Activated B cell treated with CpG ODN at 0.5 μM for 24 hours (primary cell): ENCODE measurements at regions of chr18 and their contacts with region 1.

Region 1: GRCh38 chr18:23918401-23919032 is 96.0 kb upstream of the TTC39C start:
- DNase-seq: peak; percentile 49
- ATAC-seq: peak; percentile 66
- H3K4me3 Mint-ChIP-seq: no peak overlapping the region
- H3K27ac Mint-ChIP-seq: no peak overlapping the region
- H3K4me1 Mint-ChIP-seq: peaks cover 4% of the 10 kb centered on the region
- H3K27me3 Mint-ChIP-seq: peaks cover 2% of the 10 kb centered on the region
- CTCF ChIP-seq: peak; percentile 54

Region 2: GRCh38 chr18:22800551-22800951 is 1118.0 kb before region 1 on chr18:
- CTCF ChIA-PET with region 1: no interaction called
- POLR2A ChIA-PET with region 1: no interaction called
- intact Hi-C with region 1: loop called (anchors 5 kb)
- DNase-seq: no peak
- ATAC-seq: no peak
- H3K4me3 Mint-ChIP-seq: no peak overlapping the region
- H3K27ac Mint-ChIP-seq: no peak overlapping the region
- H3K4me1 Mint-ChIP-seq: no peaks in the 10 kb centered on the region
- H3K27me3 Mint-ChIP-seq: peaks cover 7% of the 10 kb centered on the region
- CTCF ChIP-seq: no peak

Region 3: DNA sequence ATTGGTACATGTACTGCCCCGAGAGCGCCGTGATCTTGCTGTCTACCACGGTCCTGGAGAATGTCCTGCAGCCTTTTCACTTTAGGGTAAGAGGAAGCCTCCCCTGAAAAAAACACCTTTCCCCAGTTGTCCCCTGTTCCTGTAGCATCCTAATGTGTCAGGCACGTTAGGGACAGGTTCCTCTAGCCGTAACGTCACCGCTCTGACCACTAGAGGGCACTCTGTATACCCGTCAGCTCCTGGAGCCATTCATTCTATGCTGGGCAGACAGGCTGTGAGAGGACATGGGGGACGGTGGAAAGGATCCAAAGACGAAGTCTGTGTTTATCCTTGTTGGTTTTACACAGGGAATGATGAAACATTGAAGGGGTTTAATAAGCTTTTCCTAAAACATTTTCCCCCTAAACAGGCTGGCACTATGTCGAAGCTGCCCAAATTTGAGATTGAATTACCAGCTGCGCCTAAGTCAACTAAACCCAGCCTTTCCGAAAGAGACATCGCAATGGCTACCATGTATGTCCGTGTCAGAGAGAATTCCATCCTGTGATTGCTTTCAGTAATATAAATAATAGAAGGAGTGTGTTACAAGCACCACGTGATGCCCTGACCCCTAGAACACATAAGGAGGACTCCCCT is 402.5 kb before region 1 on chr18:
- CTCF ChIA-PET with region 1: no interaction called
- POLR2A ChIA-PET with region 1: no interaction called
- intact Hi-C with region 1: loop called (anchors 2 kb)
- DNase-seq: peak; percentile 42
- ATAC-seq: peak; percentile 97
- H3K4me3 Mint-ChIP-seq: no peak overlapping the region
- H3K27ac Mint-ChIP-seq: peak overlapping the region; percentile 74
- H3K4me1 Mint-ChIP-seq: peaks cover 35% of the 10 kb centered on the region
- H3K27me3 Mint-ChIP-seq: no peaks in the 10 kb centered on the region
- CTCF ChIP-seq: peak; percentile 78

Region 4: GRCh38 chr18:23725832-23726661 is 192.5 kb before region 1 on chr18:
- CTCF ChIA-PET with region 1: no interaction called
- POLR2A ChIA-PET with region 1: no interaction called
- intact Hi-C with region 1: no loop called
- DNase-seq: no peak
- ATAC-seq: no peak
- H3K4me3 Mint-ChIP-seq: no peak overlapping the region
- H3K27ac Mint-ChIP-seq: no peak overlapping the region
- H3K4me1 Mint-ChIP-seq: no peaks in the 10 kb centered on the region
- H3K27me3 Mint-ChIP-seq: peaks cover 14% of the 10 kb centered on the region
- CTCF ChIP-seq: no peak

Region 5: DNA sequence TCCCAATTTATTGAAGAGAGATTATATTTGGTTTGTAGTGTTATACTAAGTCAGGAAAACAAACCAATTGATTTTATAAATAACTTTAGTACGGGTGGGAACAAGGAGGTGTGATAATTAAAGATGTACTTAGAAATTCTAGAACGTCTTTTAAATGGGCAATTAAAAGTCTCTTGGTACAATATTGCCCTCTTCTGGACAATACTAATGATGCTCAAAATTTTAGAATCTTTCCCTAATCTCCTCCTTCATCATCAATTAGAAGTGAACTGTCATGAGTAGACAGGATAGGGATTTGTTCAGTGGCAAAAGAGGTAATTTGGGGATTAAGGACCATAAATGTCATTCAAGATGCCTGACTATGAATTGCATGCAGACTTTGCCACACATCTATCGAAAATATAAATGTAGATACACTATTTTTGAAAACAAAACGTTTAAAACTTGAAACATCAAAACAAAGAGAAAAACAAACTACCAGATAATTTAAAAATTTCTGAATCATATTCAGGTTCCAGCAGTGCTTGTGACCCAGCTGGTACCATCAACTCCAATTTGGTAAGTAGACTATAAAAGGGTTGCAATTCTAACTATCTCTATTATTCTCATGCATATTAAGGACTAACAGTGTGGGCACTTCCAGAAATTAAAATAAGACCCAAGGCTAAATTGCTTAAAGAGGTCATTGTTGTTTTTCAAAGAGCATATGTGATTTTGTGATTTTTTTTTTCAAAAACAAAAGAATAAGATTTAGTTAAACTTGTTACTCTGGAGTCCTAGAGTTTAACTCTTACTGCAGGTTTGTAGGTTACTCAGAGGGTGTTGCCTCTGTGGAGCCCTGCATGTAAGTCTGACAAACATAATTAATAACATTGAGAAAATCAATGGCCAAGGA is 105.7 kb before region 1 on chr18:
- CTCF ChIA-PET with region 1: interaction called, 9 read pairs
- POLR2A ChIA-PET with region 1: no interaction called
- intact Hi-C with region 1: loop called (anchors 1 kb)
- DNase-seq: no peak
- ATAC-seq: no peak
- H3K4me3 Mint-ChIP-seq: no peak overlapping the region
- H3K27ac Mint-ChIP-seq: no peak overlapping the region
- H3K4me1 Mint-ChIP-seq: peaks cover 11% of the 10 kb centered on the region
- H3K27me3 Mint-ChIP-seq: no peaks in the 10 kb centered on the region
- CTCF ChIP-seq: no peak

Region 6: GRCh38 chr18:23861805-23862470 is 56.6 kb before region 1 on chr18:
- CTCF ChIA-PET with region 1: no interaction called
- POLR2A ChIA-PET with region 1: no interaction called
- intact Hi-C with region 1: loop called (anchors 10 kb)
- DNase-seq: no peak
- ATAC-seq: no peak
- H3K4me3 Mint-ChIP-seq: no peak overlapping the region
- H3K27ac Mint-ChIP-seq: peak overlapping the region; percentile 52
- H3K4me1 Mint-ChIP-seq: peaks cover 73% of the 10 kb centered on the region
- H3K27me3 Mint-ChIP-seq: no peaks in the 10 kb centered on the region
- CTCF ChIP-seq: no peak

Region 7: GRCh38 chr18:23890589-23890988 is 27.9 kb before region 1 on chr18:
- CTCF ChIA-PET with region 1: no interaction called
- POLR2A ChIA-PET with region 1: no interaction called
- intact Hi-C with region 1: no loop called
- DNase-seq: no peak
- ATAC-seq: no peak
- H3K4me3 Mint-ChIP-seq: no peak overlapping the region
- H3K27ac Mint-ChIP-seq: no peak overlapping the region
- H3K4me1 Mint-ChIP-seq: peaks cover 5% of the 10 kb centered on the region
- H3K27me3 Mint-ChIP-seq: peaks cover 2% of the 10 kb centered on the region
- CTCF ChIP-seq: no peak

Region 8: GRCh38 chr18:24118750-24119577 is 200.4 kb after region 1 on chr18:
- CTCF ChIA-PET with region 1: interaction called, 13 read pairs
- POLR2A ChIA-PET with region 1: no interaction called
- intact Hi-C with region 1: loop called (anchors 1 kb)
- DNase-seq: peak; percentile 40
- ATAC-seq: peak; percentile 77
- H3K4me3 Mint-ChIP-seq: no peak overlapping the region
- H3K27ac Mint-ChIP-seq: no peak overlapping the region
- H3K4me1 Mint-ChIP-seq: peaks cover 9% of the 10 kb centered on the region
- H3K27me3 Mint-ChIP-seq: no peaks in the 10 kb centered on the region
- CTCF ChIP-seq: no peak